OCI-LY7 (cell line): ENCODE measurements at regions of chr5 and their contacts with region 1.

Region 1: GRCh38 chr5:134464988-134465815 is 53.5 kb upstream of the CDKN2AIPNL start:
- DNase-seq: no peak
- H3K4me3 ChIP-seq: peak overlapping the region; percentile 23
- H3K27ac ChIP-seq: no peak overlapping the region
- H3K4me1 ChIP-seq: peaks cover 25% of the 10 kb centered on the region
- CTCF ChIP-seq: no peak

Region 2: DNA sequence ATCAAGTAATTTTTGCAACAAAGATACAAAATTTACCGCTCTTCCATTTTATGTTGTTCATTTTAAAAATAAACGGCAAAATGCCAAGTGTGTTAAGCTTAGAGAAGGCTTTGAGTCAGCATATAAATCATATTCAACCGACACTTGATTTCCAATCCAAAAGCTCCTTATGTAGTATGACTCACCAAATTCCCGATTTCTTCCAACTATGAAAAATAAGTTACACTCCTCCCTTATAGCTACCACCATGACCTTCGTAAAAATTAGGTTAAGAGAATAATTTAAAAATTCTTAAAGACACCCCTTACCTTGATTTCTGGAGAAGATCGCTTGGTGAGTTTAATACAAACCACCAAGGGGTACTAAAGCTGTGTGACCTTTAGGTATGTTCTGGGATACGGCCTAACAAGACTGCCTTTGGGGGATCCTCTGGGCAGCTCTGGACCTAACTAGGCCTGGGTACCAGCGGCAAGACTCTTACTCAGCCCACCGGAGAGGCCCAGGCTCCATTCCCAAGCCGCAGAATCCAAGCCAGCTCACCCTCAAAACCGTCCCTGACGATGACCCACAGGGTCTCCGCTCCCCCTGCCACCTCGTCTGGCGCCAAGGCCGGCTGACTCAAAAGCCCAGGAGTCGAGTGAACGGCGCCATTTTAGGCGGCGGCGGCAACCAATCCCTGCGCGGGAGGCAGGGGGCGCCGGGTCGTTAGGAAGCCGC is 240.1 kb before region 1 on chr5:
- CTCF ChIA-PET with region 1: no interaction called
- POLR2A ChIA-PET with region 1: no interaction called
- intact Hi-C with region 1: no loop called
- DNase-seq: peak; percentile 80
- H3K4me3 ChIP-seq: peak overlapping the region; percentile 93
- H3K27ac ChIP-seq: peak overlapping the region; percentile 88
- H3K4me1 ChIP-seq: peaks cover 43% of the 10 kb centered on the region
- CTCF ChIP-seq: no peak

Region 3: DNA sequence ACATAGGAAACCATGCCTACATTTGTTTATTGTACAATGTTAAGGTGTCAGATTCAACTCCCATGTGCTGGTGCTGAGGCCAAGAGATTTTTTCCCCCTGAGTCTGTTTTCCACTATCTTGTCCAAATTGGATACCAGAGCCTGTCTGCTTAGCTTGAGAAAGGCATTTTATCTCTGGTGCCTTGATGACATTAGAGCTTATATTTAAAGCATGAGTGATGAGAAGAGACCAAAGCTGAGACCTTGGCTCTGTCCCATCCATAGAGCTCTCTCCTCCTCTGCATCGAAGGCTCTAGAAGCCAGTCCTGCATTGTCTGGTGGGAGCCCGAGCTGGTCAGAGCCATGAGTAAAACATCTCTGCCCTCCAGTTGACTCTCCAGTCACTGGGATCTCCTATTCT is 228.9 kb before region 1 on chr5:
- CTCF ChIA-PET with region 1: interaction called, 11 read pairs
- POLR2A ChIA-PET with region 1: no interaction called
- intact Hi-C with region 1: no loop called
- DNase-seq: no peak
- H3K4me3 ChIP-seq: no peak overlapping the region
- H3K27ac ChIP-seq: no peak overlapping the region
- H3K4me1 ChIP-seq: no peaks in the 10 kb centered on the region
- CTCF ChIP-seq: no peak

Region 4: GRCh38 chr5:134275822-134276221 is 189.4 kb before region 1 on chr5:
- CTCF ChIA-PET with region 1: no interaction called
- POLR2A ChIA-PET with region 1: no interaction called
- intact Hi-C with region 1: no loop called
- DNase-seq: no peak
- H3K4me3 ChIP-seq: no peak overlapping the region
- H3K27ac ChIP-seq: no peak overlapping the region
- H3K4me1 ChIP-seq: no peaks in the 10 kb centered on the region
- CTCF ChIP-seq: no peak